ENCODE measurements at regions of chr18 and their contacts with region 1.

Region 1: DNA sequence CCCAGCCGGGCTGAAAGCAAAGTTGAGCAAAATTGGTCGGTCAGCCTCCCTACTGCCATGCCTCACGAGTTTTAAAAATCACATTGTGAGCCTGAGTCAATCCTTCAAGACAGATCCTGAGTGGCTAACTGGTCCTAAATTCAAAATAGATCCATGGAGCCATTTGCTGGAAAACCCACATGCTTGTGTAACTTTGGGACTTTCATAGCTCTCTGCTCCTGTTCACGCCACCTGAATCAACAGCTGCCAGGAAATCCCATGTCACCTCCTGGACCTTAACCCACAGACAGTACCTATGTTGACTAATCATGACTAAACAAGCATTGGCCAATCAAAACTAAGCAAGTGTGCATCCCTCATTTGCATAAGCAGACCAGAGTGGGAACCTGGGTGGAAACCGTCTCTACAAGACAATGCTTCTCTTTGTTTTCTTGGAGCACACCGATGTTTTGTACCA is 42.8 kb upstream of the LDLRAD4 start:
- DNase-seq: no peak
- H3K4me3 Mint-ChIP-seq: no peak overlapping the region
- H3K27ac Mint-ChIP-seq: no peak overlapping the region
- H3K4me1 Mint-ChIP-seq: peaks cover 32% of the 10 kb centered on the region
- H3K27me3 Mint-ChIP-seq: peaks cover 8% of the 10 kb centered on the region

Region 2: GRCh38 chr18:12657684-12658425 is 517.9 kb before region 1 on chr18 and contains the start of gene SPIRE1:
- intact Hi-C with region 1: no loop called
- DNase-seq: peak; percentile 34
- H3K4me3 Mint-ChIP-seq: peak within 1 kb of the TSS; percentile 85
- H3K27ac Mint-ChIP-seq: peak within 1 kb of the TSS; percentile 63
- H3K4me1 Mint-ChIP-seq: peaks cover 27% of the 10 kb centered on the region
- H3K27me3 Mint-ChIP-seq: peaks cover 6% of the 10 kb centered on the region
- total RNA-seq, gene SPIRE1: 16.5 and 19.0 TPM in 2 replicates

Region 3: GRCh38 chr18:13137670-13138419 is 37.9 kb before region 1 on chr18:
- intact Hi-C with region 1: loop called (anchors 5 kb)
- DNase-seq: peak; percentile 76
- H3K4me3 Mint-ChIP-seq: peak overlapping the region; percentile 96
- H3K27ac Mint-ChIP-seq: peak overlapping the region; percentile 83
- H3K4me1 Mint-ChIP-seq: peaks cover 20% of the 10 kb centered on the region
- H3K27me3 Mint-ChIP-seq: peaks cover 12% of the 10 kb centered on the region

Region 4: DNA sequence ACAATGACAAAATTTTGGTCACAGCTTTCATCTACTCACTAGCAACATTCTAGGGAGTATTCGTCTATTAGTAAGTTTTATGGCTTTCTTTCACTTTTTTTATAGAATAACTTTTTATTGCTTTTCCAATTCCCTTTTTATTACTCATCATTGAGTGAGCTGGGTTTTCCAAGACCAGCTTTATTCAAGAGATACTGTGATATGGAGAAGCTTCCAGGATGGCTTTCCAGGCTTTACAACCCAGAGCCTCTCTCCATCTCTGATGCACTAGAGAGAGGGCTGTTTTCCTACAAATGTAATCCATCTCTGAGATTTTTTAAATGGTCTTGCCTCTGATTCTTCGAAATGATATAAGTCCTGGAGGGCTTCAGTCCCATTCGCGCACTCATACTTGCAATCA is 161.1 kb after region 1 on chr18:
- intact Hi-C with region 1: no loop called
- DNase-seq: no peak
- H3K4me3 Mint-ChIP-seq: no peak overlapping the region
- H3K27ac Mint-ChIP-seq: no peak overlapping the region
- H3K4me1 Mint-ChIP-seq: peaks cover 2% of the 10 kb centered on the region
- H3K27me3 Mint-ChIP-seq: peaks cover 7% of the 10 kb centered on the region